GM10248 (cell line): ENCODE measurements at regions of chr6 and their contacts with region 1.

Region 1: GRCh38 chr6:151014404-151015100 is 149.1 kb downstream of the MTHFD1L start:
- DNase-seq: peak; percentile 62
- CTCF ChIP-seq: peak; percentile 87

Region 2: GRCh38 chr6:150775415-150776203 is 238.9 kb before region 1 on chr6:
- CTCF ChIA-PET with region 1: no interaction called
- POLR2A ChIA-PET with region 1: no interaction called
- DNase-seq: no peak
- CTCF ChIP-seq: no peak

Region 3: GRCh38 chr6:150987371-150987828 is 27.2 kb before region 1 on chr6:
- CTCF ChIA-PET with region 1: interaction called, 25 read pairs
- POLR2A ChIA-PET with region 1: no interaction called
- DNase-seq: peak; percentile 41
- CTCF ChIP-seq: no peak

Region 4: DNA sequence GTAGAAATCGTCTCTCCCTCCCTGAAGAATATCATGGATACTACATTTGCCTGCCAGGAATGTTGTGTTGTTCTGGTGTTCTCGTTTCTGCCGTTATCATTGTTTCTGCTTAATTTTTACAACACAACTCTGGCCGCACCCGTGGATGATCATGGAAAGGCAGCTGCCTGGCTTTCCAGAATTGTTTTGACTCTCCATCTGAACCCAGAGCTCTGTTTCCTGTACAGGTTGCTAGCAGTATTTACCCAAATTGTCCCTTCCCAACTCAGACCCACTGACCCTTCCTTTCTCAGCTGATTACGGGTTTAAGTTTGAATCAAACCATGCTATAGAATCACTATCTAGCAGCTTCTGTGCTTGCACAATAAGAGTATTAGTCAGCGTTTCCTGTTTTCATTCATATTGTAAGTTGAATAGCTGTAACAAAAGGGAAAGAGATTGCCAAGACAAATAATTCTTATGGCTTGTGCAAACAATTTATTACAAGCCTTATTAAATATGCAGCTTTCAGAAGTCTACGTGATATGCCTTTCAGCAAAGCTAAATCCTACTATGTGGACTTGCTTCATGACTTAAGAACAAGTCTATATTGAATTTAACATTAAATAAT is 10.0 kb before region 1 on chr6:
- CTCF ChIA-PET with region 1: interaction called, 56 read pairs
- POLR2A ChIA-PET with region 1: no interaction called
- DNase-seq: no peak
- CTCF ChIP-seq: no peak

Region 5: DNA sequence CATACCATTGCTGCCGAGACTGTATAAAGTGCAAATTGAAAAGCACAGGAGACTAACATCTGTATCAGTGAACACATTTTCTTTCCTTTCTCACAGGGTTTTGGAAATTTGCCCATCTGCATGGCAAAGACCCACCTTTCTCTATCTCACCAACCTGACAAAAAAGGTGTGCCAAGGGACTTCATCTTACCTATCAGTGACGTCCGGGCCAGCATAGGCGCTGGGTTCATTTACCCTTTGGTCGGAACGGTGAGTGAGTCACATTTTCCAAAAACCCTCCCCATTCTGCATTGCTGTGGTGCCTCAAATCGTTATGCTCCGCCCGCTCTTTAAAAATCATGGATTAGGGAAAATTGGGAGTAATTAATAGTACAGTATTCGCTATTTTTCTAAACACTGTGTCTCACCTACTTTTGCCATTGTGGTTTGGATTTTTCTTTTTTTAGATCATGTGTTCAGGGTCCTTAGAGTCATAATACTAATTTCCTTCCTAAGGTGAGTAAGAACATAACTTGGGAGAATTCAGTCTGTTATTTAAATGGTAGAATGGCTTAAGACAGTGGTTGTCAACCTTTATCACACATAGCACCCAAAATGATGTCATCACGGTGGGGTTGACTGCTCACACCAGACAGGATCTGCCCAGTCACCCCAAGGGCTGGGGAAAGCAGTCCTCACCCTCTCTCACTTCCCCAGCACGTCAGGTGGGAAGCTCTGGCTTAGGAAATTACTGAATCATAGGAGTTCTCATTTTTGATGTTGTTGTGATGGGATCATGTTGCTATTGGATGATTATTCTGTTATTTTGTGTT is 22.5 kb after region 1 on chr6:
- CTCF ChIA-PET with region 1: interaction called, 19 read pairs
- POLR2A ChIA-PET with region 1: no interaction called
- DNase-seq: no peak
- CTCF ChIP-seq: no peak

Region 6: GRCh38 chr6:151078655-151079054 is 64.1 kb after region 1 on chr6:
- CTCF ChIA-PET with region 1: interaction called, 10 read pairs
- POLR2A ChIA-PET with region 1: no interaction called
- DNase-seq: no peak
- CTCF ChIP-seq: no peak

Region 7: GRCh38 chr6:151425561-151425960 is 411.0 kb after region 1 on chr6:
- CTCF ChIA-PET with region 1: no interaction called
- POLR2A ChIA-PET with region 1: no interaction called
- DNase-seq: no peak
- CTCF ChIP-seq: no peak